ENCODE measurements at regions of chr3 and their contacts with region 1.

Region 1: DNA sequence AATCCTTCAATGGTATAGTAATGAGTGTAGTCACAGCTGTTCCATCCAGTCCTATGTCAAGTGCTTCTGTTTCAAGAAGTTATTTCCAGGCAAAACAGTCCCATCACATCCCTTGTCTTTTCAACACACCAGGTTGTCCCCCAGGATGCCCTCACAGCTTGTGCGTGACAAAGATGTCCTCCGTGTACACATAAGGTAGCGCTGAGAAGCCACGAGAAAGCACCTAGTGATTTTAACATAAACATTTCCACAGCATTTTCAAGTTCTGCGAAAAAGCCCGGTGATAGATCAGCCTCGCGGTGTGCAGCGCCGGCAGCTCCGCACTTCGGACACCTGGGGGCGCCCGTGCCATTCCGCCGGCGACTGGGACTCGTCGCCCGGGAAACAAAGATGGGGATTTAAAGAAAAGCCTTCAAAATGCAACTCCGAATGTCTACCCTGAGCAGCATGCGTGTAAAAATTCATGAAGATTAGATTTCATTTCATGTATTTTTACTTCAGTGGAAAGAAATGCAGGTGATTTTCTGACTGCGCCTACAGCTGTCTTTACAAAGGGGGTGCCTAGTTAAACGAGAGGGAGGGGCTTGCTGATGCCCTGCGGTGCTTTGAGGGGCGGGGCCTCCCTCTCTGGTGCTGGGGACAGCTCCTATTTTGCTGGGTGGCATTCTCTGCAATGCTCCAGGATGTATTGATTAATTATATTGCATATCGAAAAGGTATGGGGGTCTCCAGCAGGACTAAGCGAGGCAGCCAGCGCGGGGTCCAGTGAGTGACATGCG is 49.9 kb downstream of the KY start:
- DNase-seq: no peak
- ATAC-seq: peak; percentile 94
- H3K4me3 ChIP-seq: no peak overlapping the region
- H3K27ac ChIP-seq: no peak overlapping the region
- H3K4me1 ChIP-seq: no peaks in the 10 kb centered on the region
- H3K27me3 ChIP-seq: no peaks in the 10 kb centered on the region
- CTCF ChIP-seq: peak; percentile 91 to 96 (median 92)
- EP300 ChIP-seq: no peak
- POLR2A ChIP-seq: no peak
- RAD21 ChIP-seq: peak; percentile 90

Region 2: DNA sequence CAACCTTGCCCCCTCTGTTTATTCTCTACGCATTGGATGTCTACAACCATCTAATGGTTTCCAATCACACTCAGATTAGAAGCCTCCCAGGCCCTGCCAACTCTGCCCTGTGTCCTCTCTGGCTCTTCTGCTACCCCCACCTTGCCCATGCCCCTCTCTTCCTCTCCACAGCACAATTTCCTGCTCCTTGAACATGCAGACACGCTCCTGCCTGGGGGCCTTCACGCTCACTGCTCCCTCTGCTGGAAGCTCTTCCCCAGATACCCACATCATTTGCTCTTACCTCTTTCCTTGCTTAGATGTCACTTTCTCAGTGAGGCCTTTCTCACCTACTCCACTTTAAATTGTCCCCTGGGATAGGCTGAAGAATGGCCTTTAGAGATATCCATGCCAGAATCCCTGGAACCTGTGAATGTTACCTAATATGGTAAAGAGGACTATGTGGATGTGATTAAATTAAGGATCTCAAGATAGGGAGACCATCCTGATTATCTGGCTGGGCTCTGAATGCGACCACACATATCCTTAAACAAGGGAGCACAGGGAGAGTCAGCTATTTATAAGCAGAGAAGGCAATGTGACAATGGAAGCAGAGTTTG is 40.1 kb after region 1 on chr3:
- CTCF ChIA-PET with region 1: interaction called, 4 read pairs
- POLR2A ChIA-PET with region 1: no interaction called
- RAD21 ChIA-PET with region 1: interaction called, 5 read pairs
- SMC1A ChIA-PET with region 1: no interaction called
- in situ Hi-C with region 1: no loop called
- intact Hi-C with region 1: loop called (anchors 2 kb)
- DNase-seq: no peak
- ATAC-seq: peak; percentile 68
- H3K4me3 ChIP-seq: no peak overlapping the region
- H3K27ac ChIP-seq: no peak overlapping the region
- H3K4me1 ChIP-seq: no peaks in the 10 kb centered on the region
- H3K27me3 ChIP-seq: no peaks in the 10 kb centered on the region
- CTCF ChIP-seq: peak; percentile 36 to 54 (median 49); a peak in 4 of 6 replicates
- EP300 ChIP-seq: no peak
- POLR2A ChIP-seq: no peak
- RAD21 ChIP-seq: peak; percentile 18; the same call in 1 of the 2 replicates

Region 3: GRCh38 chr3:135503760-135504686 is 903.1 kb after region 1 on chr3:
- CTCF ChIA-PET with region 1: interaction called, 25 read pairs
- POLR2A ChIA-PET with region 1: no interaction called
- RAD21 ChIA-PET with region 1: interaction called, 29 read pairs
- SMC1A ChIA-PET with region 1: interaction called, 15 read pairs
- in situ Hi-C with region 1: loop called (anchors 10 kb)
- intact Hi-C with region 1: loop called (anchors 1 kb)
- DNase-seq: peak; percentile 13
- ATAC-seq: peak; percentile 99
- H3K4me3 ChIP-seq: no peak overlapping the region
- H3K27ac ChIP-seq: no peak overlapping the region
- H3K4me1 ChIP-seq: no peaks in the 10 kb centered on the region
- H3K27me3 ChIP-seq: no peaks in the 10 kb centered on the region; a peak in 1 of 4 replicates
- CTCF ChIP-seq: peak; percentile 76 to 81 (median 80)
- EP300 ChIP-seq: no peak
- POLR2A ChIP-seq: no peak
- RAD21 ChIP-seq: peak; percentile 79

Region 4: GRCh38 chr3:135895106-135895733 is 1294.3 kb after region 1 on chr3:
- CTCF ChIA-PET with region 1: interaction called, 5 read pairs
- POLR2A ChIA-PET with region 1: interaction called, 3 read pairs
- RAD21 ChIA-PET with region 1: no interaction called
- SMC1A ChIA-PET with region 1: interaction called, 4 read pairs
- in situ Hi-C with region 1: no loop called
- intact Hi-C with region 1: loop called (anchors 1 kb)
- DNase-seq: peak; percentile 5
- ATAC-seq: peak; percentile 53; the same call in 1 of the 3 replicates
- H3K4me3 ChIP-seq: no peak overlapping the region
- H3K27ac ChIP-seq: no peak overlapping the region
- H3K4me1 ChIP-seq: no peaks in the 10 kb centered on the region
- H3K27me3 ChIP-seq: no peaks in the 10 kb centered on the region
- CTCF ChIP-seq: peak; percentile 73 to 88 (median 81)
- EP300 ChIP-seq: no peak
- POLR2A ChIP-seq: no peak
- RAD21 ChIP-seq: peak; percentile 78